RWPE1 (cell line): ENCODE measurements at regions of chr12 and their contacts with region 1.

Region 1: DNA sequence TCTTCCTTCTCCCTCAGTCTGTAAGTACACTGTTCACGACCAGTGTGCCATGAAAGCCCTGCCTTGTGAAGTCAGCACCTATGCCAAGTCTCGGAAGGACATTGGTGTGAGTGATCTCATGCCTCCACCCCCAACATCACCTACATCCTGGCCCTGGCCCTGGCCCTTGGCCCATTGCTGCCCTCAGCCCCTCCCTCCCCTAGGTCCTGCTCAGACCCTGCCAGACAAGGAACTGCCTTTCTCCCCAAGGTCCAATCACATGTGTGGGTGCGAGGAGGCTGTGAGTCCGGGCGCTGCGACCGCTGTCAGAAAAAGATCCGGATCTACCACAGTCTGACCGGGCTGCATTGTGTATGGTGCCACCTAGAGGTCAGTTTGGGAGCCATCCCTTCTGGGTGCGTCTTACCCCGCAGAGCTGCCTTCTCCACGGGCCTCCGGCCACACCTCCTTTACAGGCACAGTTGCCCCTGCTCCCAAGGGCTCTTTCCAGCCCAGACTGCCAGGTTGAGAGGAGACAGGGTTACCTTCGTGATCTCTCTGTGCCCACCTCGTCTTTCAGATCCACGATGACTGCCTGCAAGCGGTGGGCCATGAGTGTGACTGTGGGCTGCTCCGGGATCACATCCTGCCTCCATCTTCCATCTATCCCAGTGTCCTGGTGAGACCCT is 9.2 kb downstream of the DGKA start:
- DNase-seq: peak; percentile 82
- H3K27ac ChIP-seq: peak overlapping the region; percentile 89
- CTCF ChIP-seq: peak; percentile 88

Region 2: DNA sequence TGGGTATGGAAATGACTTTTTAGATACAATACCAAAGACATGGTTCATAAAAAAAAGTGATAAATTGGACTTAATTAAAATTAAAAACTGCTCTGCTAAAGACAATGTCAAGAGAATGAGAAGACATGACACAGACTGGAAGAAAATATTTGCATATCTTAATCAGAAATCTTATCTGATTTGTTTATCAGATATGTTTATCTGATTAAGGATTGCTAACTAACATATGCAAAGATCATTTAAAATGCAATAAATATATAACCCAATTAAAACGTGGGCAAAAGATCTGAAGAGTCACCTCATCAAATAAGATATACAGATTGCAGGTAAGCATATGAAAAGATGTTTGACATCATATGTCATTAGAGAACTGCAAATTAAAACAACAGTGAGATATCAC is 87.5 kb before region 1 on chr12:
- CTCF ChIA-PET with region 1: no interaction called
- POLR2A ChIA-PET with region 1: no interaction called
- DNase-seq: no peak
- H3K27ac ChIP-seq: no peak overlapping the region
- CTCF ChIP-seq: no peak

Region 3: DNA sequence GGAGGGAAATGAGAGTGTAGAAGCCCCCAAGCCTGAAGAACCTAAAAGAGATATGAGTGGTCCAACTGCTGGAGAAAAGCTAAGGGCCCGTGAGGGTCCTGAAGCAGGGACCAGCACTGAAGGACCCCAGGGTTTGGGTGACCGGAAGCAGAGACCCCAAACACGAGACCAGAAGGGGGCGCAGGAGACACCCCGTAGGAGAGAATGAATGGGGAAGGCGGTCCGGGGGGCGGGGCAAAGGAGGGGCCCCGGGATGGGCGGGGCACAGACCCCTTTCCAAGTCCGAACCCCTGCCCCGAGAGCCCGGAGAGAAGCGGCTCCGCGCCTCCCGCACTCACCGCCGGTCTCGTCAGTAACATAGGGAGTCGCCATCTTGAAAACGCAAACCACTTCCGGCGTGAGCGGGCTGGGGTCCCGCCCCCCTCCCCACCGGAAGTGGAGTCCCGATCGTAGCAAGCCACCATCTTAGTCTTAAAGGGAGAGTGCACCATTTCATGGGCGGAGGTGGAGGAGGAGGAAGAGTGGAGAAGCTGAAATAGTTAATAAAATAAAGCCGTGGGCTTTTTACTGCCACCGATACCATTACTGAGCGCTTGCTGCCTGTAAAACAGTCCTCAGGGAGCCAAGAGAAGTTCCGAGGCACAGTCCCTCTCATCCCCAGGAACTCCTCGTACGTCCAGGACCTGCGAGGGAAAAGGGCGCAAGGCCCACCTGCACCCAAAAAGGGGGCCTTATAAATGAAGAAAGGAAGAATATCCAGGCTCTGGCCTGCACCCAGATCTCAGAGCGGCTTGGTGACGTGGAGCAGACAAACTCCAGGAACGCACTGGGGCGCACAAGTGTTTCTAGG is 13.2 kb before region 1 on chr12:
- CTCF ChIA-PET with region 1: interaction called, 18 read pairs
- POLR2A ChIA-PET with region 1: interaction called, 3 read pairs
- DNase-seq: peak; percentile 95
- H3K27ac ChIP-seq: peak overlapping the region; percentile 99
- CTCF ChIP-seq: peak; percentile 87

Region 4: DNA sequence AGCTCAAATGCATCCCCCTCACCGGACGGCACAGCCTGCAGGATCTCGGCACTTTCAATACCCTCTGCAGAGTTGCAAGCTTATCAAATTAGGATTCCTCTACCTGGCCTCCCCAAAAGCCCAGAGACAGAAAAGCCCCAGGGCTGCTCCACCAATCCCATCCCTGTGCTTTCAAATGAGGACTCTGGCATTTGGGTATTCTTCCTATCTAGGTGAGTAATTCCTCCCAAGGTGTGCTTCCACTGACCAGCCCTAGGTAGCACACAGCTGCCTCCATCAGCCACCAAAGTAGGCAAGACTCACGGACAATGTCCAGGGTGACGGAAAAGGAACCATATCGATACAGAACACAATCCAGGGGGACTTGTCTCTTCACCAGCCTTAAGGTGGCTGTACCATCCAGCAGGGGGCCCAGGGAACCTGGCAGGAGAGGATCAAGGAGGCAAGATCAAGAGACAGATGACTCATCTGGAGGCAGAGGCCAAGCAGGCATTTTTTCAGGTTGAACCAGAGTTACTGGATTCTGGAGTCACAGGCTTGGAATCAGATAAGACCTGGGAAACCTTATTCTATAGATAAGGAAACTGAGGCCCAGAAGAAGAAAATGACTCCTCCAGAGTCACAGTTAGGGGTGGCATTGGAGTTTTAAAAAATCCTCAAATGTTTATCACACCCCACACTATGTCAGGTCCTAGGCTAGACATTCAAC is 15.8 kb after region 1 on chr12:
- CTCF ChIA-PET with region 1: interaction called, 13 read pairs
- POLR2A ChIA-PET with region 1: no interaction called
- DNase-seq: peak; percentile 88
- H3K27ac ChIP-seq: peak overlapping the region; percentile 72
- CTCF ChIP-seq: no peak; the same call in 1 of the 2 replicates

Region 5: DNA sequence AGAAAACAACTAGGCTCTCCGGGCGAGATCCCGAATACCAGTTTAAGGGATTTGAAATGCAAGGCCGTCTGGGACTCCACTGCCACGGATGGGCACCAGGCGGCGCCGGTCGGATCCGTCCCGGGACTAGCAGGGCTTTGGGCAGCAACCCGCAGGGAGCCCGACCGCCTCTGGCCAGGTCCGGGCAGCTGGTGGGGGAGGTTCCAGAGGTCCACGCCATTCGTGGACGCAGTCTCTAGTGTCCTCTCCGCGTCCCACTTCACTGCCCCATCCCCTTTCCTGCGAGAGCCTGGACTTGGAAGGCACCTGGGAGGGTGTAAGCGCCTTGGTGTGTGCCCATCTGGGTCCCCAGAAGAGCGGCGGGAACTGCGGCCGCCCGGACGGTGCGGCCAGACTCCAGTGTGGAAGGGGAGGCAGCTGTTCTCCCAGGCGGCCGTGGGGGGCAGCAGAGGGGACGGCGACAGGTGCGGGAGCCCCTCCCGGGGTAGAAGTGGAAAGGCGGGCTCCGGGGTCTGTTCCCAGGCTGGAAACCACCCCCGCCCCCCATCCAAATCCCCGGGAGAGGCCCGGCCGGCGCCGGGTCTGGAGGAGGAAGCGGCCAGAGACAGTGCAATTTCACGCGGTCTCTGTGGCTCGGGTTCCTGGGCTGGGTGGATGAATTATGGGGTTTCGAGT is 138.9 kb after region 1 on chr12:
- CTCF ChIA-PET with region 1: no interaction called
- POLR2A ChIA-PET with region 1: no interaction called
- DNase-seq: peak; percentile 81
- H3K27ac ChIP-seq: peak overlapping the region; percentile 80
- CTCF ChIP-seq: peak; percentile 92

Region 6: DNA sequence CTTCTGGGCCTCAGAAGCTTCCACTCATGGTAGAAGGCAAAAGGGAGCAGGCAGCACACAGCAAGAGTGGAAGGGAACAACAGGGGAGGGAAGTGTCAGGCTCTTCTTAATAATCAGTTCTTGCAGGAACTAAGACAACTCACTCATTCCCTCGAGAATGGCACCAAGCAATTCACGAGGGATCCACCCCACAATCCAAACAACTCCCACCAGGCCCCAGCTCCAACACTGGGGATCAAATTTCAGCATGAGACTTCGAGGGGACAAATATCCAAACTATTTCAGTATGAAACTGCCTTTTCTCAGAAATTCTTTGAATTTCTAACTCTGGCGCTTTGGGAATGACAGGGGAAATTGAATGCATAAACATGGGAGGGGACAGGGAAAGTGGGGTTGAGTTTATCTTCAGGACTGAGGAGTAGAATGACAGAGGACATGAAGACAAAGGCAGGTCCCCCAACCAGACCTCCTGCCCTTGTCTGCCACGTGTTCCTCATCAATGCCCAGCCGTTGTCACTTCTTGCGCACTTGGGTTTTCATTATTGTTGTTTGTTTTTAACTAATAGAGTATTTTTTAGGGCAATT is 447.0 kb after region 1 on chr12:
- CTCF ChIA-PET with region 1: no interaction called
- POLR2A ChIA-PET with region 1: no interaction called
- DNase-seq: no peak
- H3K27ac ChIP-seq: no peak overlapping the region
- CTCF ChIP-seq: no peak